ENCODE measurements at regions of chr2 and their contacts with region 1.

Region 1: GRCh38 chr2:241508240-241509154 is at the start of gene STK25:
- DNase-seq: peak; percentile 98
- ATAC-seq: peak; percentile 97
- H3K4me3 ChIP-seq: peak within 1 kb of the TSS; percentile 92
- H3K27ac ChIP-seq: peak within 1 kb of the TSS; percentile 77
- H3K4me1 ChIP-seq: peaks cover 17% of the 10 kb centered on the region
- H3K27me3 ChIP-seq: no peaks in the 10 kb centered on the region
- CTCF ChIP-seq: no peak
- POLR2A ChIP-seq: peak; percentile 51; the same call in 1 of the 2 replicates
- RAD21 ChIP-seq: no peak
- total RNA-seq, gene STK25: 203 and 258 TPM in 2 replicates

Region 2: GRCh38 chr2:239806758-239807434 is 1701.6 kb before region 1 on chr2:
- CTCF ChIA-PET with region 1: no interaction called
- POLR2A ChIA-PET with region 1: no interaction called
- dilution Hi-C with region 1: no loop called
- in situ Hi-C with region 1: no loop called
- intact Hi-C with region 1: no loop called
- DNase-seq: no peak
- ATAC-seq: no peak
- H3K4me3 ChIP-seq: no peak overlapping the region
- H3K27ac ChIP-seq: no peak overlapping the region
- H3K4me1 ChIP-seq: no peaks in the 10 kb centered on the region
- H3K27me3 ChIP-seq: no peaks in the 10 kb centered on the region
- CTCF ChIP-seq: no peak
- POLR2A ChIP-seq: no peak
- RAD21 ChIP-seq: no peak

Region 3: GRCh38 chr2:241271641-241272297 is 236.7 kb before region 1 on chr2:
- CTCF ChIA-PET with region 1: no interaction called
- POLR2A ChIA-PET with region 1: no interaction called
- dilution Hi-C with region 1: no loop called
- in situ Hi-C with region 1: no loop called
- intact Hi-C with region 1: loop called (anchors 5 kb)
- DNase-seq: peak; percentile 79
- ATAC-seq: peak; percentile 70
- H3K4me3 ChIP-seq: peak overlapping the region; percentile 74
- H3K27ac ChIP-seq: peak overlapping the region; percentile 75
- H3K4me1 ChIP-seq: peaks cover 25% of the 10 kb centered on the region
- H3K27me3 ChIP-seq: no peaks in the 10 kb centered on the region
- CTCF ChIP-seq: no peak
- POLR2A ChIP-seq: peak; percentile 79
- RAD21 ChIP-seq: 0 out of 2 replicates have a peak, but pooled peaks have one; percentile 4

Region 4: GRCh38 chr2:241432824-241433448 is 75.6 kb before region 1 on chr2:
- CTCF ChIA-PET with region 1: no interaction called
- POLR2A ChIA-PET with region 1: no interaction called
- dilution Hi-C with region 1: no loop called
- in situ Hi-C with region 1: no loop called
- intact Hi-C with region 1: no loop called
- DNase-seq: no peak
- ATAC-seq: no peak
- H3K4me3 ChIP-seq: no peak overlapping the region
- H3K27ac ChIP-seq: no peak overlapping the region
- H3K4me1 ChIP-seq: no peaks in the 10 kb centered on the region
- H3K27me3 ChIP-seq: no peaks in the 10 kb centered on the region
- CTCF ChIP-seq: no peak
- POLR2A ChIP-seq: no peak
- RAD21 ChIP-seq: no peak

Region 5: GRCh38 chr2:241558532-241559322 is 50.2 kb after region 1 on chr2 and contains the start of gene BOK:
- CTCF ChIA-PET with region 1: interaction called, 3 read pairs
- POLR2A ChIA-PET with region 1: interaction called, 3 read pairs
- dilution Hi-C with region 1: no loop called
- in situ Hi-C with region 1: no loop called
- intact Hi-C with region 1: loop called (anchors 1 kb)
- DNase-seq: peak; percentile 72
- ATAC-seq: peak; percentile 74
- H3K4me3 ChIP-seq: peak within 1 kb of the TSS; percentile 91
- H3K27ac ChIP-seq: peak within 1 kb of the TSS; percentile 77
- H3K4me1 ChIP-seq: peaks cover 16% of the 10 kb centered on the region
- H3K27me3 ChIP-seq: no peaks in the 10 kb centered on the region
- CTCF ChIP-seq: no peak
- POLR2A ChIP-seq: no peak
- RAD21 ChIP-seq: no peak
- total RNA-seq, gene BOK: 13.3 and 15.8 TPM in 2 replicates

Region 6: DNA sequence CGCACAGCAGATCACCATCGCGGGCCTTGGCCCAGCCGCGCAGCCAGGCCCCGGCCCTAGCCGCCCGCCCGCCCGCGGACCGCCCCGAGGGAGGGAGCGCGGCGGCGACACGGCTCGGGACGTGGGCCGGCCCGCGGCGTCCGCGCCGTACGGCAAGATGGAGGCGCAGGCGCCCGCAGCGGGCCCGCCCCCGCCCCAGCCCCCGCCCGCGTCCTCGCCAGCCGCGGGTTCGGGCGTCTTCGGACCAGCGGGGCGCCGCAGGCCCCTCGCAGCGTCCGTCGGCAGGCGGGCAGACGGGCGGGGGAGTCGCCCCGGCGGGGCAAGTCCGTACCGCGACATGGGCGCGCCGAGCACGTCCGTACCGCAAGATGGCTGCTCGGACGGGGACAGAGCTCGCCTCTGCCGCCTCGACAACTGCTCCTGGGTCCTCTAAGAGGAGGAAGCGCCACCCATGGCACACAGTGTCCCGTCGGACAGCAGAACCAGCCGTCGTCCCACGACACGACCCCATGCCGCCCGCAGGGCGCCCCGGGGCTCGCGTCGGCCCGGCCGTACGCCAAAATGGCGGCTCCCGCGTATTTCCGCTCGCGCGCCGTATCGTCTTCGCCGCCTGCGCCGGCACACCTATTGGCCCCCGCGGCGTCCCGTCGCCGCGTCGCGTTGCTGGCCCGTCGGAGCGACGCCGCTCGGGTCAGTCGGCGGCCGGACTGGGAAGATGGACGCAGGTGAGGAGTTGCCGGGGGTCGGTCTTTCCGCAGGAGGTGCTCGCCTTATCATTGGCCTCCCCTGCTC is 128.7 kb after region 1 on chr2 and contains the starts of genes ATG4B and THAP4:
- CTCF ChIA-PET with region 1: no interaction called
- POLR2A ChIA-PET with region 1: no interaction called
- dilution Hi-C with region 1: no loop called
- in situ Hi-C with region 1: no loop called
- intact Hi-C with region 1: loop called (anchors 5 kb)
- DNase-seq: peak; percentile 82
- ATAC-seq: peak; percentile 87
- H3K4me3 ChIP-seq: peak within 1 kb of the TSS; percentile 100
- H3K27ac ChIP-seq: peak within 1 kb of the TSS; percentile 100
- H3K4me1 ChIP-seq: peaks cover 3% of the 10 kb centered on the region; the same call in 1 of the 2 replicates
- H3K27me3 ChIP-seq: no peaks in the 10 kb centered on the region
- CTCF ChIP-seq: no peak
- POLR2A ChIP-seq: peak; percentile 82
- RAD21 ChIP-seq: no peak
- total RNA-seq, gene ATG4B: 102 and 146 TPM in 2 replicates
- total RNA-seq, gene THAP4: 33.9 and 42.2 TPM in 2 replicates

Region 7: DNA sequence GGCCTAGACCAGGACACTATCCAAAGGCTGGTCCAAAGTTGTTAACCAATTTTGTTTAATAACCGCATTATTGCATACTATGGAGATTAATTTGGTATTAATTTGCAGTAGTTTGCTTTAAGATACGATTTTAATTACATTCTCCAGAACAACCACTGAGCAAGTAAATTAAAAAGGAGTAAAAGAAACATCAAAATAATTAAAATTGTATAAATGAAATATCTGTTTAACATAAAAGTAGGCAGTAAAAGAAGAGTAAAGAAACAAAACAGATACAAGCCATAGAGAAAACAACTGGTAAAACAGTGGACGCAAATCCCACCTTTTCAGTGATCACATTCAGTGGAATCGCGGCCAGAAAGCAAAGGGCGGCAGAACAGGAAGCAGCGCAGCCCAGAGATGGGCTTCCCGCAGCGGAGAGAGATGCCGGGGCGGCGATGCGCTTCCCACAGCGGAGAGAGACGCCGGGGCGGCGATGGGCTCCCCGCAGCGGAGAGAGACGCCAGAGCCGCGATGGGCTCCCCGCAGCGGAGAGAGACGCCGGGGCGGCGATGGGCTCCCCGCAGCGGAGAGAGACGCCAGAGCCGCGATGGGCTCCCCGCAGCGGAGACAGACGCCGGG is 537.8 kb after region 1 on chr2:
- CTCF ChIA-PET with region 1: no interaction called
- POLR2A ChIA-PET with region 1: interaction called, 16 read pairs
- dilution Hi-C with region 1: no loop called
- in situ Hi-C with region 1: no loop called
- intact Hi-C with region 1: no loop called
- DNase-seq: no peak
- ATAC-seq: no peak
- H3K4me3 ChIP-seq: peak overlapping the region; percentile 27; the same call in 1 of the 2 replicates
- H3K27ac ChIP-seq: no peak overlapping the region
- H3K4me1 ChIP-seq: no peaks in the 10 kb centered on the region
- H3K27me3 ChIP-seq: peaks cover 41% of the 10 kb centered on the region
- CTCF ChIP-seq: no peak
- POLR2A ChIP-seq: no peak
- RAD21 ChIP-seq: no peak

Measured in IMR-90 (cell line).